Activated naive CD4-positive, alpha-beta T cell treated with anti-CD3 and anti-CD28 coated beads for 36 hours (primary cell): ENCODE measurements at regions of chr1 and their contacts with region 1.

Region 1: GRCh38 chr1:220776720-220777326 is 9.9 kb upstream of the MTARC1 start:
- DNase-seq: peak; percentile 79
- H3K4me3 Mint-ChIP-seq: no peak overlapping the region
- H3K27ac Mint-ChIP-seq: no peak overlapping the region
- H3K4me1 Mint-ChIP-seq: no peaks in the 10 kb centered on the region
- H3K27me3 Mint-ChIP-seq: peaks cover 14% of the 10 kb centered on the region

Region 2: GRCh38 chr1:219837274-219837993 is 939.4 kb before region 1 on chr1:
- CTCF ChIA-PET with region 1: no interaction called
- intact Hi-C with region 1: loop called (anchors 1 kb)
- DNase-seq: peak; percentile 10
- H3K4me3 Mint-ChIP-seq: no peak overlapping the region
- H3K27ac Mint-ChIP-seq: no peak overlapping the region
- H3K4me1 Mint-ChIP-seq: no peaks in the 10 kb centered on the region
- H3K27me3 Mint-ChIP-seq: peaks cover 20% of the 10 kb centered on the region

Region 3: GRCh38 chr1:220189750-220190347 is 587.0 kb before region 1 on chr1:
- CTCF ChIA-PET with region 1: no interaction called
- intact Hi-C with region 1: loop called (anchors 1 kb)
- DNase-seq: no peak
- H3K4me3 Mint-ChIP-seq: no peak overlapping the region
- H3K27ac Mint-ChIP-seq: no peak overlapping the region
- H3K4me1 Mint-ChIP-seq: no peaks in the 10 kb centered on the region
- H3K27me3 Mint-ChIP-seq: no peaks in the 10 kb centered on the region

Region 4: GRCh38 chr1:220217383-220217988 is 559.3 kb before region 1 on chr1:
- CTCF ChIA-PET with region 1: no interaction called
- intact Hi-C with region 1: loop called (anchors 5 kb)
- DNase-seq: no peak
- H3K4me3 Mint-ChIP-seq: no peak overlapping the region
- H3K27ac Mint-ChIP-seq: no peak overlapping the region
- H3K4me1 Mint-ChIP-seq: peaks cover 28% of the 10 kb centered on the region
- H3K27me3 Mint-ChIP-seq: no peaks in the 10 kb centered on the region

Region 5: GRCh38 chr1:220296981-220297380 is 479.8 kb before region 1 on chr1:
- CTCF ChIA-PET with region 1: interaction called, 3 read pairs
- intact Hi-C with region 1: loop called (anchors 1 kb)
- DNase-seq: no peak
- H3K4me3 Mint-ChIP-seq: no peak overlapping the region
- H3K27ac Mint-ChIP-seq: no peak overlapping the region
- H3K4me1 Mint-ChIP-seq: no peaks in the 10 kb centered on the region
- H3K27me3 Mint-ChIP-seq: peaks cover 8% of the 10 kb centered on the region

Region 6: GRCh38 chr1:220680085-220680687 is 96.6 kb before region 1 on chr1:
- CTCF ChIA-PET with region 1: interaction called, 4 read pairs
- intact Hi-C with region 1: loop called (anchors 1 kb)
- DNase-seq: peak; percentile 9
- H3K4me3 Mint-ChIP-seq: no peak overlapping the region
- H3K27ac Mint-ChIP-seq: no peak overlapping the region
- H3K4me1 Mint-ChIP-seq: no peaks in the 10 kb centered on the region
- H3K27me3 Mint-ChIP-seq: no peaks in the 10 kb centered on the region

Region 7: DNA sequence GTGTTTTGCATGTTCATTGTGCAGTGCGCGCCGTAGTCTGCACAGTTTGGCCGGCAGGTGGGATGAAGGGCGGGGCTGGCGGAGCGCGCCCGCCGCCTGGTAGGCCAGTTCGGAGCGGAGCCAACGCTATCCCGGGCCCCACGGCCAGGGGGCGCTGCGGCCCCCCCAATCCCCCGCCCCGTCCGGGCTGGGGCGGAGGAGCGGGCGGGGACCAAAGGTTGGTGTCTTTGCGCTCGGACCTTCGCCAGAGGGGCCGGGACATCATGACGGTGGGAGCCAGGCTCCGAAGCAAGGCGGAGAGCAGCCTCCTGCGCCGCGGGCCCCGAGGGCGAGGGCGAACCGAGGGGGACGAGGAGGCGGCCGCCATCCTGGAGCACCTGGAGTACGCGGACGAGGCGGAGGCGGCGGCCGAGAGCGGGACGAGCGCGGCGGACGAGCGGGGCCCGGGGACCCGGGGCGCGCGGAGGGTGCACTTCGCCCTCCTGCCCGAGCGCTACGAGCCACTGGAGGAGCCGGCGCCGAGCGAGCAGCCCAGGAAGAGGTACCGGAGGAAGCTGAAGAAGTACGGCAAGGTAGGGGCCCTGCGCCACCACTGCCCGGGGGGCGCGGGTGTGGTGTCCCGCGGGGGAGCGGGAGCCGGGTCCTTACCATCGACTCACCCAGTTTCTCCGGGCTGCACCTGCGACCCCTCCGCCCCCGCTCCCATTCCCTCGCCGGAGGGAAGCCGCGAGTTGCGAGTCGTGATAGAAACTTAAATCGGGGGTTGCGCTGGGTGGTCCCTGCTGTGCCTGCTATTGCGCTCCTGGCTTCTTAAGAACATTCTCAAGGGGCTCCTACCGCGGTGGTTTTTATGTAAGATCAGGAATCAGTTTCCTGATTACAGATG is 86.4 kb before region 1 on chr1 and contains the start of gene C1orf115:
- CTCF ChIA-PET with region 1: interaction called, 6 read pairs
- intact Hi-C with region 1: loop called (anchors 1 kb)
- DNase-seq: peak; percentile 77
- H3K4me3 Mint-ChIP-seq: peak within 1 kb of the TSS; percentile 81
- H3K27ac Mint-ChIP-seq: no peak within 1 kb of the TSS
- H3K4me1 Mint-ChIP-seq: peaks cover 4% of the 10 kb centered on the region
- H3K27me3 Mint-ChIP-seq: peaks cover 5% of the 10 kb centered on the region
- total RNA-seq, gene C1orf115: 1.1 to 1.3 TPM